ENCODE measurements at regions of chrX and their contacts with region 1.

Region 1: GRCh38 chrX:69109683-69110082 is 55.6 kb downstream of the PJA1 start:
- DNase-seq: no peak
- H3K4me3 ChIP-seq: no peak overlapping the region
- H3K27ac ChIP-seq: no peak overlapping the region
- H3K4me1 ChIP-seq: no peaks in the 10 kb centered on the region
- H3K27me3 ChIP-seq: no peaks in the 10 kb centered on the region
- CTCF ChIP-seq: no peak
- EP300 ChIP-seq: no peak
- POLR2A ChIP-seq: no peak

Region 2: DNA sequence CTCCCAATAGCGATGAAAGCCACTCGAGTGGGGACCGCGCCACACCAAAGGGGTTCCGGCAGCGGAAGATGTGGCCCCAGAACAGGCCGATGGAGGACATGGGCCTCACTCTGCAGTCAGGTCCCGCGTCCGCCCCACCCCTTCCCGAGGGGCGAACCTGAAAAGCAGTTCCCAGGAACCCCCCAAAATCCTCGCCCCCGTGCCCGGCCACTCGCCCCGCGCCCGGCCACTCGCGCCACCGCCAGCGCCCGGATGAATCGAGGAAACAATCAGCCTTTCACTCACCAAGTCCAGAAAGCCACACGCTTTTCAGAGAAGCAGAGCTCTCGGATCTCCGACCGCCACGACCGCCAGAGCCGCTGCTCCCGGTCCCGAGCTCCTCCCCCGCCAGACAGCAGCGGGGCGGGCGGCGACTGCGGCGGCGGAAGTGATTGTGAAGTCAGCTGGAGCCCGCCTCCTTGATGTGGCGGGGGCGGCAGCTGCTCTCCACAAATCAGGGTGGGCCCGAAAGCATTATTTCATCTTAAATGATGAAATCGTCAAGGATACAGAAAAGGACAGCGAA is 55.5 kb after region 1 on chrX and contains the start of gene PJA1:
- intact Hi-C with region 1: loop called in 1 of 4 experiments (anchors 10 kb)
- DNase-seq: peak; percentile 73 to 82 (median 79)
- H3K4me3 ChIP-seq: peak within 1 kb of the TSS; percentile 70
- H3K27ac ChIP-seq: peak within 1 kb of the TSS; percentile 33 to 78
- H3K4me1 ChIP-seq: no peaks in the 10 kb centered on the region
- H3K27me3 ChIP-seq: no peaks in the 10 kb centered on the region
- CTCF ChIP-seq: no peak
- EP300 ChIP-seq: no peak
- POLR2A ChIP-seq: peak; percentile 78
- total RNA-seq, gene PJA1: 17.2 to 63.9 (median 51.1) TPM